GM13976 (cell line): ENCODE measurements at regions of chr1 and their contacts with region 1.

Region 1: GRCh38 chr1:84944767-84945486 is 51.9 kb upstream of the LPAR3 start:
- DNase-seq: peak; percentile 59
- CTCF ChIP-seq: peak; percentile 74

Region 2: GRCh38 chr1:85027242-85027983 is 82.5 kb after region 1 on chr1:
- in situ Hi-C with region 1: loop called (anchors 10 kb)
- DNase-seq: peak; percentile 40
- CTCF ChIP-seq: no peak

Region 3: GRCh38 chr1:85240174-85240601 is 295.3 kb after region 1 on chr1:
- in situ Hi-C with region 1: loop called (anchors 10 kb)
- DNase-seq: peak; percentile 44
- CTCF ChIP-seq: peak; percentile 22